ENCODE measurements at regions of chr10 and their contacts with region 1.

Region 1: DNA sequence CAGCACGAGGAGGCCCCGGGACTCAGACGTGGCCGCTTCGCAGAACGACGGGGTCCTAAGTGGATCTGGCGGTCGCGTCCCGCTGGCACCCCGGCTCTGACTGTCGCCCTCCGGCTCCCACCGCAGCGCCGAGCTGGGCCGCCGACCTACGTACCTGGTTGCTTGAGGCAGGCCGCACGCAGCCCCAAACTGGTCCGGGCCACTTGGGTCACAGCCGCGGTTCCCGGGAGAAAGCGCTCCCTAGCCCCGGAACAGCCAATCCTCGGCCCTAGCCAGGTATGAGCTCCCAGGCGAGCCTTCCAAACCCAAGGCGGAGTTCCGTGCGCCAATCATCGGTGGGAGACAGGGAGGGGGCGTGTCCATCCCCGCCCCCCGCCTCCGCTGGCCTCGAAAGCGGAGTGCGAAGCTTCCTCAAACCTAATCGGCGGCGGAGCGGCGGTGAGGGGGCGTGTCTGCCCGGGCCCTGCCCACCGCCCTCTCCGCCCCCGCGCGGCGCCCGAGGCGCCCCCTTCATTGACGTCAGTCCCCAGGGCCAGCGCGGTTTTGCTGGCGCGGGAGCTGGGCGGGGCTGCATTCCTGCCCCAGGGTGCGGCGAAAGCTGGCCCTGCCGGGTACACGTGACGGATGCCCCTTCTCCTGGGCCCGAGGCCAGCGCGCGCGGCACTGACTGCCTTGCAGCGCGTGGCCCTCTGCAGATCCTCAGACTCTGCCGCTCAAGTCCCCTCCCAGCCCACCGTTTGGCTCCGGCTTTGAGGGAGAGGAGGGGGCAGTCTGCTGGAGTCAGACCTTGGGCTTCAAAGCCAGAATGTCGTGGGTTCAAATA is at the start of gene AVPI1:
- DNase-seq: peak; percentile 76
- H3K4me3 ChIP-seq: peak within 1 kb of the TSS; percentile 64
- CTCF ChIP-seq: no peak

Region 2: DNA sequence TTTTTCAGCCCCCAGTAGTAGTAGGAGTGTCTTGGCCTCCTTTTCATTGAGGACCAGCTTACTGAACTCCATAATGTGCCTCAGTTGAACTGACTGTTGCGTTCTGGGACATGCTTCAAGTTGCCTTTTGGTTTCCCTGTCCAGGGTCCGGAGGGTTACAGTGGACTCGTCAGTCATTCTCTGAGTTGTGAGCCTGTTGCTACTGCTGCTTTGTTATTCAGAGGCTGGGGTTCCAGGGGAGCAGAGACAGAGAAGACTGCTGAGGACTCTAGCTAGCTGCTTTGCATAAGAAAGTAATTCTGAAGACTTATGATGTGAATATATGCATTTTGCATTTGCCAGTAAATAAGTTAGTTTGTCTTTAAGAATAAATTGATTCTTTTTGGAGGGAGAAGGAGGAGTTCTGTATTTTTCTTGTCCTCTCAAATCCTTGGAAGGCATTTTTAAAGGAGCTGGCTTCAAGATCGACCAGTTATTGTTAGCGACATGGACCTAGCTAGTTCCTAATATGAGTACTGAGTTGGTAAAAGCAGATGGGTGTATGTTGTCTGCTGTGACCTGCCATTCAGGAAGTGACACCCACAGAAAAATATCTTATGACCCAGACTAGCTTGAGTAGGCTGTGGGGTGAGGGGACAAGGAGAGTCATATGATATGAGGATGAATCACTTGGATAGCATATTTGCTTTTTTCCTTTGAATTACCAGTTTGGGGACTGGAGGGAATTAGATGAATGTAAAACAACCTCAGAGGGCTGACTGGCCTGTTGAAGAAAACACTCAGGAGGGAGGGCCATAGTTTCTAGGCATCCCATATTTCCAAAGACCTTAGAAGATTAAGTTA is 38.4 kb before region 1 on chr10:
- in situ Hi-C with region 1: no loop called
- DNase-seq: no peak
- H3K4me3 ChIP-seq: no peak overlapping the region
- CTCF ChIP-seq: no peak

Region 3: DNA sequence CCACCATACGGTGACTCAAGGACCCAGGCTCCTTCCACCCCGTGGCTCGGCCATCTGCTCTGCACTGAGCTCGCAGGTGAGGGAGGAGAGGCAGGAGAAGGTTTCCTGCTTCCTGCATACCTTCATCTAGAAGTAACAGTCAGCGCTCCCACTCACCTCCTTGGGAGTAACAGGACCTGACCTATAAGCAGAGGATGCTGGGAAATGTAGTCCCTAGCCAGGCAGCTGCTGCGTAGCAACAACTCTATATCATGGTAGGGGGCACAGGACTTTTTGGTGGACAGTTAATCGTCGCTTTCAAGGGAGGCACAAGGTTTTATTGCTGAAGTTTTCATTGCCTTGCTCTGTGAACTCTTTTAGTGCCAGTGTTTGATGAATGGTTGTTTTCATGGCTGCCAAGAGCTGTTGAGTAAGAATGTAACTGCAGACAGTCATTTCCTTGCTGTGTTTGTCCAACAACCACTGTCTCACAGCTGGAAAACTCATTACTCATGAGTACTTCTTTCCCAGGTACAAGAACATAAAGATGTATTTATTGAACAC is 39.5 kb after region 1 on chr10:
- in situ Hi-C with region 1: loop called (anchors 5 kb)
- DNase-seq: peak; percentile 70
- H3K4me3 ChIP-seq: peak overlapping the region; percentile 6
- CTCF ChIP-seq: no peak

Region 4: DNA sequence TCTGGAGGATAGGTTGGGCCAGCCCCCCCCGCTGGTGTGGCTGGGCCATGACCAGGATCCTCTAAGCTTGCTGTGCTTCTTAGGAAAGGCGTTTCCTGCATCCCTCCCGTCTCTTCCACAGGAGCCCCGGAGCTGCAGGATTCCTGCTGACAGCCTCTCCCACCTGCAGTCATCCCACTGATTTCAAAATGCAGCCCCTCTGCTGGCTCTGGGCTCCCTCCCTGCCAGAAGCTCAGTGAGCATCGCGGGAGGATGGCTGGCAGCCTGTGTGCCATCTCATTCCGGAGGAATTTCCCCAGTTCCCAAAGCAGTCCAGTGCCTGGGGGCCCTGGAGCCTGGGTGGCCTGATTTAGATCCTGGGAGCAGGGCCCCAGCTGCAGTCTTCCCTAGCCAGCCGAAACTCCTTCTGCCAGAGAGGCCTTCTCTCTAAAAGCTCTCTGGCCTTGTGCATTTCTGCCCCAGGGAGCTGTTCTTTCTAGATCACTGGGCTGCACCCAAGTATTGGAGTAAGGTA is 140.7 kb after region 1 on chr10:
- in situ Hi-C with region 1: no loop called
- DNase-seq: no peak
- H3K4me3 ChIP-seq: no peak overlapping the region
- CTCF ChIP-seq: no peak